Left colon (tissue), 2 donors: ENCODE measurements at regions of chr3 and their contacts with region 1.

Region 1: DNA sequence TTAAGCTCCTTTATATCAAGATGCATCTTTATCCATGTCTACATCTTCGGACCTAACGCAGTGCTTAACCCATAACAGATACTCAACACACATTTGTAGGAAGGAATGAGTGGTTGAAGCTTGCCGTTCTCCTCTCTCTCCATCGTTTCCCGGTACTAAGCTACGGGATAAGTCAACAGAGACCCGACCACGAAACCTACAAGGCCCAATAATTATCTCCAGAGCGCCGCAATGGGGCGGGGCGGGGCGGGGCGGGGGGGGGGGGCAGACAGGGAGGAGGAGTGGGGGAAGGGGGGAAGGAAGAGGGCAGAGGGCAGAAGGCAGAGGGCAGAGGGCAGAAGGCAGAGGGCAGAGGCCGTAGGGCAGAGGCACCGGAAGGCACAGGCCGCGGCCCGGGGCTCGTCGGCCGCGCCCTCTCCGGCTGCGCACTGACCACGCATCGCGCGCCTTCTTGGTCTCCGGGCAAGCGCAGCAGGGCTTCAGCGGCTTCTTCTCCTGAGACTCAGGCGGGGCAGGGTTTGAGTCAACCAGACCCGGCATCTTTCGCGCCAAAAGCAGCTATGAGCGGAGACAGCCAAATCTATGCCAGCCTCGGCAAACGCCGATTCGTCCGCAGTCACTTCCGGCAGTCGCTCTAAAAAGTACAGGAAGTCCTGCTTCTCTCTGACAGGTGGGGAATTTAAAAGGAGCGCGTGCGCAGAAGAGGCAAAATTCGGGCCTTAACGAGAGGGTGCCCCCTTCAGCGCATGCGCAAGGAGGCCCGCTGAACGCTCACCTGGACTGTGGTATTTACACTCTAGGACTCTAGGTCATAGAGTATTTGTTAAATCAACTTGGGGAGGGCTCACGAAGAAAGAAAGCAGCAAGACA is at the start of gene COX17:
- DNase-seq: peak; percentile 97 to 98
- ATAC-seq: peak; percentile 91
- total RNA-seq, gene COX17: 46.0 to 56.8 TPM

Region 2: DNA sequence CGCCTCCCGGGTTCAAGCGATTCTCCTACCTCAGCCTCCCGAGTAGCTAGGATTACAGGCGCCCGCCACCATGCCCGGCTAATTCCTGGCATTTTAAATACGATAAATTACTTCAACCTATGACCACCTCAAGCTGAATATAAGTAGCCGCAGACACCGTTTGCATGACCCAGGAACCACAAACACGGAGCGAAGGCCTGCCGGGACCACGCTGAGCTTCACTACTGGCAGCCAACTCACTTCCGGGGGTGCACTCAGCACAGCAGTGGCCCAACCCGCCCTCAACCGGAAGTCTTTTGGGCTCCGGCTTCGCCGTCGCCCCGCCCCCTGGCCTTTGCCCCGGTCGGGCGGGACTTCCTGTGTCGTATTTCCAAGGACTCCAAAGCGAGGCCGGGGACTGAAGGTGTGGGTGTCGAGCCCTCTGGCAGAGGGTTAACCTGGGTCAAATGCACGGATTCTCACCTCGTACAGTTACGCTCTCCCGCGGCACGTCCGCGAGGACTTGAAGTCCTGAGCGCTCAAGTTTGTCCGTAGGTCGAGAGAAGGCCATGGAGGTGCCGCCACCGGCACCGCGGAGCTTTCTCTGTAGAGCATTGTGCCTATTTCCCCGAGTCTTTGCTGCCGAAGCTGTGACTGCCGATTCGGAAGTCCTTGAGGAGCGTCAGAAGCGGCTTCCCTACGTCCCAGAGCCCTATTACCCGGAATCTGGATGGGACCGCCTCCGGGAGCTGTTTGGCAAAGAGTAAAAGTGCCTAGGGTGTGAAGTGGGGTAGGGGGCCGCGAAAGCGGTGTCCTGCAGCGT is 178.6 kb before region 1 on chr3 and contains the start of gene TIMMDC1:
- intact Hi-C with region 1: loop called in 1 of 2 experiments (anchors 10 kb)
- DNase-seq: peak; percentile 97 to 98
- ATAC-seq: peak; percentile 98
- total RNA-seq, gene TIMMDC1: 91.4 to 92.4 TPM